ENCODE measurements at regions of chr3 and their contacts with region 1.

Region 1: DNA sequence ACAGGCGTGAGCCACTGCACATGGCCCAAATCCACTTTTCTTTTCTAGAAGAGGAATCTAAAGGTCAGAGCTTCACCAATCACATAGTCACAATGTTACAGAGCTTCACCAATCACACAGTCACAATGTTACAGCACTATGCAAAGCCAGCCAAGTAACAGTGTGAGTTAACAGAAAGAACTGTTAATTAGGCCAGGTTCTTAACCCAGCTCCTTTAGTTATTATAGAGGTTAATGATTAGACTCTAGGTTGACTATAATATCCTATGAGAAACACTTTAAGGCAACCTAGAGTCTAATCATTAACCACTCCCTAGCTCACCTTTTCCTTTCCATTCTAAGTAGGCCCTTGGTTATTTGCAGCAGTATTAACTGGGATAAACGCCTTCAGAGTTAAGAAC is 54.0 kb downstream of the TASOR start:
- H3K4me3 Mint-ChIP-seq: no peak overlapping the region
- H3K27ac Mint-ChIP-seq: no peak overlapping the region
- H3K4me1 Mint-ChIP-seq: no peaks in the 10 kb centered on the region
- H3K27me3 Mint-ChIP-seq: no peaks in the 10 kb centered on the region

Region 2: GRCh38 chr3:56610669-56611335 is 18.2 kb before region 1 on chr3:
- intact Hi-C with region 1: no loop called
- H3K4me3 Mint-ChIP-seq: no peak overlapping the region
- H3K27ac Mint-ChIP-seq: no peak overlapping the region
- H3K4me1 Mint-ChIP-seq: peaks cover 7% of the 10 kb centered on the region
- H3K27me3 Mint-ChIP-seq: no peaks in the 10 kb centered on the region

Region 3: DNA sequence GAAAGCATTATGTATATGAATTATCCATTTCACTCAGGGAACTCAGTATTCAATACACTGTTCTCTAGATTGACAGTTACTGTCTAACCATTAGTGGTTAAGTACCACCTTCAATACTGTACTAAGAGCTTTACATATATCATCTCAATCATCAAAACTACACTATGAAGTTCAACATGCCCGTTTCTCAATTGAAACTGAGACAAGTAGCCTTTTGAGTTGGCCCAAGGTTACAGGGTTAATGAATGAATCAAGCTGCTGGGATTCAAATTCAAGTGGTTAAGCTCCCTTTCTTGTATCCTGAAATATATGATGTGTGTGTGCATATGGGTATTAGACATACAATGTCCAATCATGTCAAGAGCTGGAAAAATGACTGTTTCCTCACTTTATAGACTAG is 48.2 kb after region 1 on chr3:
- intact Hi-C with region 1: loop called (anchors 10 kb)
- H3K4me3 Mint-ChIP-seq: no peak overlapping the region
- H3K27ac Mint-ChIP-seq: no peak overlapping the region
- H3K4me1 Mint-ChIP-seq: peaks cover 18% of the 10 kb centered on the region
- H3K27me3 Mint-ChIP-seq: no peaks in the 10 kb centered on the region